Stomach (tissue), 19 donors: ENCODE measurements at regions of chr13 and their contacts with region 1.

Region 1: DNA sequence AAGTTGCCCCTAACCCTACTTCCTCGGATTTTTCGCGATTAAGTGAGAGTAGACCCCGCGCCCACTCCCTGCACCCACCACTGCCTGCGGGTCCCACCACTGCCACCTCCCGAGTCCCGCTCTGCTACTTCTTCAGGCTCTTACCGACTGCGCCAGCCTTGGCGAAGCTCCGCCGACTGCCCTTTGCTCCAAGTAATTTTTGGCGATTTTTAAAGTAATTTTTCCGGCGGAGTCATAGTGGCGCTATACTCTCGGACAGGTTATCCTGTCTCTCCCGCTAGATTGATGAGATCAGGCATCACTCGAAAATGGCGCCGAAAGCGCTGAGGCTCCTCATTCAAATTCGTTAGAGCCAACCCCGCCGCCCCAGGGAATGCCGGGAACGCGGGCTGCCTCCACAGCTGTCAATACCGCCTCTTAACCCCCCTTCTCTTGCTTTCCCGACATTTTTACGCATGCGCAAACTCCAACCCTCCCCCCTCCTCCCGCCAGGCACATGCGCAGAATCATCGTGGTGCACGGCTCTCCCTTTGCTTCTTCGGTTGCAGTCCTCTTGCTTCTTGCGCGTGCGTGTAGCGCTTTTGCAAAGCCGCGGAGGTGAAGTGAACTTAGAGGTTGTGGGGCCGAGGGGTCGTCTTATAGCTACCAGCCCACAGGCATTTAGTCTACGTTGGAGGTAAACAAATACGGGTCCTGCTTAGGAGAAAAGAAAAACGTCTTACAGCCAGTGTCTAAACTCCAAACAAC is 66.6 kb downstream of the KCNRG start:
- DNase-seq: peak; percentile 98 to 99
- H3K4me3 ChIP-seq: peak overlapping the region; percentile 67 to 88 (median 79)
- H3K27ac ChIP-seq: peak overlapping the region; percentile 77 to 92 (median 89)
- H3K4me1 ChIP-seq: peaks cover 4 to 66% (median 36%) of the 10 kb centered on the region in 4 donors
- H3K27me3 ChIP-seq: peaks cover 0 to 33% (median 0%) of the 10 kb centered on the region in 3 donors
- CTCF ChIP-seq: no peak
- EP300 ChIP-seq: no peak
- POLR2A ChIP-seq: no peak

Region 2: DNA sequence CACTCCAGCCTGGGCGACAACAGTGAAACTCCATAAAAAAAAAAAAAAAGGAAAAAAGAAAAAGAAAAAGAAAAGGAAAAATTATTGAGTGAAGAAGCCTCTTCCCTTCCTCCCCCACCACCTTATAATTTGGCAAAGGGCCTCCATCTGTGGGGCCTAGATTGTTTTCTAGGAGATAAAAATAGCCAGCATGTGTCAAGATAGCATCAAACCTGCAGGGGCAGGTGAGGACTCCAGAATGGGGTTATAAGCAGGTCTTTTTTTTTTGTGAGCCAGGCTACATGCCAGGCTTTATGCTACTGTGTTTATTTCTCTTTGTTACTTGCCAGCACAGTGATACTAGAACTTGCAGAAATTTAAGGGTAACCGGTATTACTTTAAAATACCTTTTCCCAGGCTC is 96.7 kb before region 1 on chr13:
- intact Hi-C with region 1: loop called (anchors 10 kb)
- DNase-seq: peak in 1 of 2 donors; percentile 36
- H3K4me3 ChIP-seq: no peak overlapping the region
- H3K27ac ChIP-seq: no peak overlapping the region
- H3K4me1 ChIP-seq: peaks cover 0 to 9% (median 3%) of the 10 kb centered on the region in 4 donors
- H3K27me3 ChIP-seq: no peaks in the 10 kb centered on the region
- CTCF ChIP-seq: no peak
- EP300 ChIP-seq: no peak
- POLR2A ChIP-seq: no peak

Region 3: GRCh38 chr13:50531917-50532899 is 450.4 kb after region 1 on chr13:
- intact Hi-C with region 1: no loop called
- DNase-seq: peak in 1 of 2 donors; percentile 53
- H3K4me3 ChIP-seq: no peak overlapping the region
- H3K27ac ChIP-seq: no peak overlapping the region
- H3K4me1 ChIP-seq: peaks cover 9 to 28% (median 15%) of the 10 kb centered on the region in 4 donors
- H3K27me3 ChIP-seq: no peaks in the 10 kb centered on the region
- CTCF ChIP-seq: peak in 5 of 7 experiments; percentile 24 to 56 (median 45)
- EP300 ChIP-seq: no peak
- POLR2A ChIP-seq: no peak